ENCODE measurements at regions of chrX and their contacts with region 1.

Region 1: DNA sequence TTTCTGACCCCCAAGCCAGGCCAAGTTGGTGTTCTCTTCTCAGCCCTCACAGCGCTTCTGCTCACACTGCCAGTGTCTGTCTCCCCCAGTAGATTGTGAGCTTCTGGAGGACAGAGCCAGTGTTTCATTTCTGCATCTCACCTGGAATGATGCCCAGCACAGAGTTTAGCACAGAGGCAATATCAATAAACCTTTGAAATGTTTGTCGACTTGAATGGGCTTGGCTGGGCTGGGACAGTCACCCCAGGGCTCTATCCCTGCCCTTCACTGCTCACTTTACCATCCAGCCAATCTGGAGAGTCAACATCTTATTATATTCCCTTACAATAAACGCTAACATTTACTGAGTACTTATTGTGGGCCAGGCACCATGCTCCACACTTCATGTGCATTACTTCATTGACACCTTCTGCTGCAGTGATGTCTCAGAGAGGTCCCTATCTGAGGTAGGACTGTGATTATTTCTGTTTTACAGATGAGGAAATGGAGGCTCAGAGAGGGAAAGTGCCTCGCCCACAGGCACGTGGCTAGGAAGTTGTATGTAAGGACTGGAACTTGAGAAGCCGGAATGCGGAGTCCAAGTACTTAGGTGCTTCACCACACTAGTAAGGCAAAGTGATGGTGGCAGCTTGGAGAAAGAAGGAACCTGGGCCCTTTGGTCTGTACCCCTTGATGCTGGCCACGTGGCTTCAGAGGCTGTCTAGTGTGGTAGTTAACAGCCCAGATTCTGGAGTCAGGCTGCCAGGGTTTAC is 19.5 kb downstream of the EFNB1 start:
- DNase-seq: no peak
- H3K4me3 ChIP-seq: no peak overlapping the region
- H3K27ac ChIP-seq: no peak overlapping the region
- H3K4me1 ChIP-seq: no peaks in the 10 kb centered on the region
- H3K27me3 ChIP-seq: no peaks in the 10 kb centered on the region
- CTCF ChIP-seq: no peak

Region 2: GRCh38 chrX:69229436-69229835 is 381.1 kb after region 1 on chrX:
- CTCF ChIA-PET with region 1: no interaction called
- POLR2A ChIA-PET with region 1: interaction called, 12 read pairs
- intact Hi-C with region 1: no loop called
- DNase-seq: no peak
- H3K4me3 ChIP-seq: no peak overlapping the region
- H3K27ac ChIP-seq: no peak overlapping the region
- H3K4me1 ChIP-seq: peaks cover 7% of the 10 kb centered on the region
- H3K27me3 ChIP-seq: no peaks in the 10 kb centered on the region
- CTCF ChIP-seq: no peak

Measured in A673 (cell line).